ENCODE measurements at regions of chr6 and their contacts with region 1.

Region 1: DNA sequence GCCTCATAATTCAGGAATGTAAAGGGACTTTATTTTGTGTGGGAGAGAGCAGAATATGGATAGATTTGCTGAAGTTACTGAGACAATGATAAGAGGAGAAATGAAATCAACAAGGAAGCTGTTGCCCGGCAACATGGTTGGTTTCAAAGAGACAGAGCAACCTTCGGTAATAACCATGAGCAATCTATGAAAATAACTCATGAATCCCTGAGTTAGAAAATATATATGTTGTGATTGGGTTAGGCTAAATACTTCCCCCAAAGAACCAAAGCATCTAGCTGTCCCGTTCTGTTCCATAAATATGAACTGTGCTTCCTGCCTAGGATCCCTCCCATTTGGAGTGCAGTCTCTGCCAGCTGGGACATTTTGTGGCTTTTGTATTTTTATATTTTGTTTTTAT is 23.1 kb downstream of the SERPINB1 start:
- DNase-seq: peak; percentile 61
- H3K4me3 Mint-ChIP-seq: no peak overlapping the region
- H3K27ac Mint-ChIP-seq: peak overlapping the region; percentile 17
- H3K4me1 Mint-ChIP-seq: peaks cover 40% of the 10 kb centered on the region
- H3K27me3 Mint-ChIP-seq: no peaks in the 10 kb centered on the region

Region 2: GRCh38 chr6:2841264-2842138 is 22.9 kb after region 1 on chr6 and contains the start of gene SERPINB1:
- CTCF ChIA-PET with region 1: interaction called, 4 read pairs
- intact Hi-C with region 1: loop called (anchors 1 kb)
- DNase-seq: peak; percentile 94
- H3K4me3 Mint-ChIP-seq: peak within 1 kb of the TSS; percentile 81
- H3K27ac Mint-ChIP-seq: peak within 1 kb of the TSS; percentile 87
- H3K4me1 Mint-ChIP-seq: peaks cover 61% of the 10 kb centered on the region
- H3K27me3 Mint-ChIP-seq: no peaks in the 10 kb centered on the region
- total RNA-seq, gene SERPINB1: 200 to 208 TPM

Region 3: DNA sequence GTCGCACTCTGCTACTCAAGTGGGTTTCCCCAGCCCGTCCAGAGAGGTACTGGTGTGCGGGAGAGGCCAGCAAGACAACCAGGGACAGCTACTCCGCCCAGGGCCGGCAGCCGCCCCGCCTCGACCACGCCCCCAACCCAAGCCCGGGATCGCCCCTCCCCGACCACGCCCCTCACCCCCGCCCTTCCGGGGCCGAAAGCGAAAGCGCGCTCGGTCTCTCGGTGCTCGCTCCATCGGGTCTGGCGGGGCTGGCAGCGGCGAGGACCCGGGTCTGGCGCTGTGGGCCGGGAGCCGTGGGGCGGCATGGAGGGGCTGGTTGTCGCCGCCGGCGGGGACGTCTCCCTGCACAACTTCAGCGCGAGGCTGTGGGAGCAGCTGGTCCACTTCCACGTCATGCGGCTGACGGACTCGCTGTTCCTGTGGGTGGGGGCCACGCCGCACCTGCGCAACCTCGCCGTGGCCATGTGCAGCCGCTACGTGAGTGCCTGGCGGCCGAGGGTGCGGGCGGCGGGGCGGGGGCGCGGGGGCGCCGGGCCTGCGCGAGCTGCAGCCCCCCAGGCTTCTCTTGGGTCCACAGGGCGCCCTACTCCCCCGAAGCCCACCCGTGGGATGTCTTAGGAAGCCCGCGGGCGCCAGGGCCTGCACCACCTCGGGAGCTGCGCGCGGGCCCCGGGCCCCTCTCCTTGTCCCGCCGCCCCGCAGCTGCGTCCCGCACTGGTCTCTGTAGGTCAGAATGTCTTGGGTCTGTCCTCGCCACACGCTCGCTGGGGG is 440.3 kb after region 1 on chr6 and contains the start of gene PSMG4:
- CTCF ChIA-PET with region 1: no interaction called
- intact Hi-C with region 1: no loop called
- DNase-seq: peak; percentile 94
- H3K4me3 Mint-ChIP-seq: peak within 1 kb of the TSS; percentile 94
- H3K27ac Mint-ChIP-seq: peak within 1 kb of the TSS; percentile 87
- H3K4me1 Mint-ChIP-seq: peaks cover 35% of the 10 kb centered on the region
- H3K27me3 Mint-ChIP-seq: no peaks in the 10 kb centered on the region
- total RNA-seq, gene PSMG4: 23.9 to 26.2 TPM